Uterus (tissue), 4 donors: ENCODE measurements at regions of chr11 and their contacts with region 1.

Region 1: GRCh38 chr11:115958089-115959000 is 454.1 kb upstream of the CADM1 start:
- DNase-seq: no peak
- H3K4me3 ChIP-seq: no peak overlapping the region
- H3K27ac ChIP-seq: no peak overlapping the region
- H3K4me1 ChIP-seq: no peaks in the 10 kb centered on the region
- H3K27me3 ChIP-seq: no peaks in the 10 kb centered on the region
- CTCF ChIP-seq: no peak
- POLR2A ChIP-seq: no peak

Region 2: GRCh38 chr11:115874843-115875242 is 83.5 kb before region 1 on chr11:
- intact Hi-C with region 1: no loop called
- DNase-seq: no peak
- H3K4me3 ChIP-seq: no peak overlapping the region
- H3K27ac ChIP-seq: no peak overlapping the region
- H3K4me1 ChIP-seq: no peaks in the 10 kb centered on the region
- H3K27me3 ChIP-seq: no peaks in the 10 kb centered on the region
- CTCF ChIP-seq: no peak
- POLR2A ChIP-seq: no peak

Region 3: DNA sequence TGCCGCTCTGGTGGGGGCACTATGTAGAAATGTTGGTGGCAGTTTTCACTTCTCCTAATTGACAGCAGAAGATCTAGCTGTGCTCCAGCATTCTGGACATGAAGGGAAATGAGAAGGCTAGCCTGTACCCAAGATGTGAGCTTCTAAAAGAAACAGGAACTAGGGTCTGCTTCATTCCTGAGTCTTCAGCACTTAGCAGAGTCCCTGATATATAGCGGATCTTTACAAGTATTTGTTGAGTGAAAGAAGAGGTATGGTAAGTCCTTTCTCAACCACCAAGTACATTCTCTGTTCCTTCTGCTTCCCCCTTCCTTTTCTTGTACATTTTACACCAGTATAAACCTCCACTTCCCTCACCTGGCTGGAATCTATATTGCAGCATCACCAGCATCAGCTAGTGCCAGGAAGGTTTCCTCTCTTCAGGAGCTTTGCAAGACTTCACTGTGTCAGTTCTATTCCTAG is 45.8 kb before region 1 on chr11:
- intact Hi-C with region 1: loop called (anchors 2 kb)
- DNase-seq: no peak
- H3K4me3 ChIP-seq: no peak overlapping the region
- H3K27ac ChIP-seq: no peak overlapping the region
- H3K4me1 ChIP-seq: no peaks in the 10 kb centered on the region
- H3K27me3 ChIP-seq: no peaks in the 10 kb centered on the region
- CTCF ChIP-seq: peak in 1 of 4 experiments; percentile 3
- POLR2A ChIP-seq: no peak